Activated CD8-positive, alpha-beta memory T cell treated with anti-CD3 and anti-CD28 coated beads, Interleukin-2, amount 10 ng/mL, durations not matched to agents 7 days and 5 days (primary cell): ENCODE measurements at regions of chr17 and their contacts with region 1.

Region 1: DNA sequence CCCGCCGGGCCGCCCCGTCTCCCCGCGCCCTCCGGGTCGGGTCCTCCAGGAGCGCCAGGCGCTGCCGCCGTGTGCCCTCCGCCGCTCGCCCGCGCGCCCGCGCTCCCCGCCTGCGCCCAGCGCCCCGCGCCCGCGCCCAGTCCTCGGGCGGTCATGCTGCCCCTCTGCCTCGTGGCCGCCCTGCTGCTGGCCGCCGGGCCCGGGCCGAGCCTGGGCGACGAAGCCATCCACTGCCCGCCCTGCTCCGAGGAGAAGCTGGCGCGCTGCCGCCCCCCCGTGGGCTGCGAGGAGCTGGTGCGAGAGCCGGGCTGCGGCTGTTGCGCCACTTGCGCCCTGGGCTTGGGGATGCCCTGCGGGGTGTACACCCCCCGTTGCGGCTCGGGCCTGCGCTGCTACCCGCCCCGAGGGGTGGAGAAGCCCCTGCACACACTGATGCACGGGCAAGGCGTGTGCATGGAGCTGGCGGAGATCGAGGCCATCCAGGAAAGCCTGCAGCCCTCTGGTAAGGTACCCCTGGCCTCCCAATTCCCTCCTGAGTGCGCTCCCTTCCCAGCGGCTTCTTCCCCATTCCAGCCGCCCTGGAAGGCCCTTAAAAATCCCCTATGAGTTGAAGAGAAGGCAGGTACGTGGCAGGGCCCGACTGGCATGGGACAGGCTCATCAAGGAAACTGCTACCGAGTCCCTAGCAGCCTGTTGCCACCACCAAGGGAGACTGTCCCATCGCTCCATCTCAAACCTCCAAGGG is 505 bp downstream of the IGFBP4 start:
- DNase-seq: peak; percentile 77
- ATAC-seq: peak; percentile 87
- H3K4me3 Mint-ChIP-seq: peak overlapping the region; percentile 66
- H3K27ac Mint-ChIP-seq: peak overlapping the region; percentile 87
- H3K4me1 Mint-ChIP-seq: peaks cover 44% of the 10 kb centered on the region
- H3K27me3 Mint-ChIP-seq: peaks cover 22% of the 10 kb centered on the region

Region 2: DNA sequence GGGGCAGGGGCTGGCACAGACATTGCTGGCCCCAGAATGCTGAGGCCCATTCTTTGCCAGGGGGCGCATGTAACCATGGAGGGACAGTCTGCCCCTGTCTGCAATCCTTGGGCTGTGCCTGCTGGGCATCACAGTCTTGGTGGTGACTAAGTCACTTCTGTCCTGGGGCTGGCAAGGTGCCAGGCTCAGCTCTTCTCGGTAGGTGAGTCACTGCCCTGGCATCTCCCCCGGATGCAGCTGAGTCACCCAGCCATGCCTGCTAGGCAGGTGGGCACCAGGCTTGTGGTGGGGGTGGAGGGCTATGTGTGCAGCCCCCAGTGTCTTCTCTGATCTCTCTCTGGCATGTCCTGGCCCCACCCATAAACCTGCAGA is 129.2 kb before region 1 on chr17:
- CTCF ChIA-PET with region 1: no interaction called
- DNase-seq: peak; percentile 82
- ATAC-seq: no peak
- H3K4me3 Mint-ChIP-seq: no peak overlapping the region
- H3K27ac Mint-ChIP-seq: peak overlapping the region; percentile 13
- H3K4me1 Mint-ChIP-seq: peaks cover 72% of the 10 kb centered on the region
- H3K27me3 Mint-ChIP-seq: no peaks in the 10 kb centered on the region

Region 3: DNA sequence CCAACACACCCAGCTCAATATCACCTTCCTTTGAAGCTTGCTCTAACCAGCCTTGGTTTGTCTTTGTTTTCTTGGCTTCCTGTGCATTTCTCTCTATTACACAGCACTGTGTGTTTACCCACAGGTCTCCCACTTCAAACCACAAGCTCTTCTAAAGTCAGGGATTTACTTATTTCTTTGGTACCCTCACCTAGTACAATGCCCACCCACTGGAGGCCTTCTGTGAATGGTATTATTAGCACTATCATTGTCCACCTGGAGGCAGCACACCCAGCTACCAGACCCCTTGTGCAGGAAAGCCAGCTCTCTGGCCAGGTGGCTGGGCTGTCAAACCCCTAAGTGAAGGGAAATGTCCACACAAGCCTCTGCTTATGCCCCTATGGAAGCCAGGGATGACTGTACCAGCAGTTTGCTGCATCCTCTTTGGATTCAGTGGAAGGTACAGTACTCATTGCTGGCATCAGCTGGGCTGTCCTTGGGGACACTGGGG is 16.7 kb before region 1 on chr17:
- CTCF ChIA-PET with region 1: interaction called, 18 read pairs
- DNase-seq: peak; percentile 67
- ATAC-seq: peak; percentile 89
- H3K4me3 Mint-ChIP-seq: no peak overlapping the region
- H3K27ac Mint-ChIP-seq: peak overlapping the region; percentile 41
- H3K4me1 Mint-ChIP-seq: peaks cover 32% of the 10 kb centered on the region
- H3K27me3 Mint-ChIP-seq: peaks cover 32% of the 10 kb centered on the region

Region 4: GRCh38 chr17:40536295-40537171 is 92.8 kb after region 1 on chr17:
- CTCF ChIA-PET with region 1: interaction called, 115 read pairs
- DNase-seq: no peak
- ATAC-seq: no peak
- H3K4me3 Mint-ChIP-seq: no peak overlapping the region
- H3K27ac Mint-ChIP-seq: no peak overlapping the region
- H3K4me1 Mint-ChIP-seq: peaks cover 80% of the 10 kb centered on the region
- H3K27me3 Mint-ChIP-seq: peaks cover 12% of the 10 kb centered on the region